ENCODE measurements at regions of chr20 and their contacts with region 1.

Region 1: DNA sequence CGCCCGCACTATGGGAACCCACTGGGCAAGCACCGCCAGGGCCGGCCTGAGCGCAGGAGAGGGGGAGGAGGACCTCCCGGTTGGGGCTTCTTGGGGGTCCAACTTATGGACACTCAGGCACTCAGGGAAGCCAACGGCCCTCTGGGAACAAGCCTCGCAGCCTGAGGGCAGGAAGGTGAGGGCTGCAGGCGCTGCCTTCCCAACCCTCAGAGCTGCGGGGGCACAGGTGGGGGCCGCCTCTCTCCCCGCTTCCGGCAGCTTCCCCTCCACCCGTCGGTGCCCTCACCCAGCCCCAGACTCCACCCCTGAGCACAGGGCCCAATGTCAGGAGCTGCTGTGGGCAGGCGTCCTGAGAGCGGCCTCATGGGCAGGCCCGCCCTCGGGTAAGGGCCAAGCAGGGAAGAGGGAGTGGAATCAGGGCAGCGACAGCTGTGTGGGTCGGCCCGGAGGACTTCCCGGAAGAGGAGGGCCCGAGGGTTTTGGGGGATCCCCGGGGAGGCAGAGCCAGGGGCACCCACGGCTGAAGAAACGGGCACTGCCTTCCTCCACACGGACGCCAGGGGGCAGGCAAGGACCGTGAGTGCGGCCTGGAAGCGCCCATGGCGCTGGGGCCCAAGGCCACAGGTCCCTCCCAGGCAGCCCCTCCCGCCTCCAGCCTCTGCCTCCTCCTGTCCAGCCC is 488 bp upstream of the PTK6 start:
- DNase-seq: peak; percentile 97
- H3K4me3 ChIP-seq: peak overlapping the region in 3 of 4 donors; percentile 45 to 56 (median 46)
- H3K27ac ChIP-seq: peak overlapping the region; percentile 89 to 98 (median 96)
- H3K4me1 ChIP-seq: peaks cover 16 to 51% (median 42%) of the 10 kb centered on the region in 4 donors
- H3K27me3 ChIP-seq: peaks cover 10% of the 10 kb centered on the region
- CTCF ChIP-seq: peak; percentile 92 to 100 (median 95)
- EP300 ChIP-seq: peak; percentile 41
- POLR2A ChIP-seq: peak; percentile 94

Region 2: DNA sequence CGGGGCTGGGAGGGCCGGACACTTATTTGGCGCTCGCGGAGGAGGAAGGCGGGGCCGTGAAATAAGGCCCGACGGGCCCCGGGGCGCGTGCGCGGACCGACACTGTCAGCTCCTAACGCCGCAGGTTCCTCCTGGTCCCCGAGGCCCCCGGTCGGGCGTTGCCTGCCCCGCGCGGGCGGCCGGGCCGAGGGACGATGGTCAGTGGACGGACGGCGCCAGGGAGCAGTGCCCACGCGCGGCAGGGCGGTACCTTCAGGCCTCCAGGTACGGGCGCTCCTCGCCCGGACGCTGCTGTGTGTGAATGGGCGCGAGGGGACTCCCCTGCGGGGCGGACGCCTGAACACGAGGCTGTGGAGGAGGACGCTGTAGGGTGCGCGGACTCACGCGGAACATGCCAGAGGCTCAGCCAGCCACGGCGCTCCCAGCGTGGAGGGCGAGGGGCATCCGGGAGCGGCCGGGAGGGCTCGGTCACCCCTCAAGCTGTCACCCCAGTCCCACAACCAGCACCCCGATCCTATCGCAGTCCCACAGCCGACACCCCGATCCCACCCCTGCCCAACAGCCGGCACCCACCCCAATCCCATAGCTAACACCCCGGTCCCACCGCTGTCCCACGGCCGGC is 89.6 kb after region 1 on chr20:
- in situ Hi-C with region 1: loop called in 1 of 4 experiments (anchors 25 kb)
- intact Hi-C with region 1: no loop called
- DNase-seq: peak; percentile 97
- H3K4me3 ChIP-seq: peak overlapping the region; percentile 78 to 100 (median 95)
- H3K27ac ChIP-seq: peak overlapping the region; percentile 93 to 100 (median 98)
- H3K4me1 ChIP-seq: peaks cover 8 to 27% (median 15%) of the 10 kb centered on the region in 4 donors
- H3K27me3 ChIP-seq: no peaks in the 10 kb centered on the region
- CTCF ChIP-seq: no peak
- EP300 ChIP-seq: no peak
- POLR2A ChIP-seq: peak; percentile 83

Region 3: GRCh38 chr20:63782051-63782471 is 244.4 kb after region 1 on chr20:
- in situ Hi-C with region 1: no loop called
- intact Hi-C with region 1: loop called (anchors 10 kb)
- DNase-seq: no peak
- H3K4me3 ChIP-seq: no peak overlapping the region
- H3K27ac ChIP-seq: no peak overlapping the region
- H3K4me1 ChIP-seq: peaks cover 0 to 3% (median 0%) of the 10 kb centered on the region in 4 donors
- H3K27me3 ChIP-seq: no peaks in the 10 kb centered on the region
- CTCF ChIP-seq: peak in 1 of 5 experiments; percentile 6
- EP300 ChIP-seq: no peak
- POLR2A ChIP-seq: no peak

Measured in transverse colon (tissue), 4 donors.